PC-3 (cell line): ENCODE measurements at regions of chr6 and their contacts with region 1.

Region 1: DNA sequence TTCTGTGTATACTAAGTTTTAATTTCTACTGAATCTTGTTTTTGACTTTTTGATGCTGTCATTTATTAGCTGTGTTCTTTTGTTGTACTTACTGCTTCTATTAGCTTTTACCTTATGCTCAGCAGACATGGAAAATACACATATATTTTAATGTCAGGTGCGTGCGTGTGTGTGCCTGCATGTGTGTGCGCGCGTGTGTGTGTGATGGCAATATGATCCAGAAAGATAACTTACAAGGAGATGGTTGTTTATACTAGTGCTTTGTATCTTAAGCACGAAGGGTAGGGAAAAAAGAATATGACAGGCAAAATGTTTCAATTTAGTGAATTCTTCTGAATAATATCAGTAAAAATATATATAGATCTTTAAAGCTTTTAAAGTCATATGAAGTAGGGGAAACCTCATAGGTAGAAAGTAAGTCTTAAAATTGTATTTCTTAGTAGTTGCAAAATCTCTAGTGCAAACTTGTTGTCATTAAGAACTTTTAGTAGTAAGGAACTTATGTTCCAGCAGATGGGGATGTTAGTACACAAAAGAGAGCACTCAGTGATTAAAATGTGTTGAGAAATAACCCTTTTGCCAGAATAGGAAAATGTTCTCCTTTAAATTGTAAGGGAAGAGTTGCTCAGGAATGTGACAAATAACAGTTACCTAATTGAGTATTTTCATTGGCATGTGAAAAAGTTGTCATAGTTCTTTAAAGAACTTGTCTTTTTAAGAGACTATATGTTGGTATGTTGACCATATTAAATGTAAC is 13.2 kb downstream of the QKI start:
- DNase-seq: peak; percentile 47
- ATAC-seq: no peak
- H3K4me3 ChIP-seq: no peak overlapping the region
- H3K27ac ChIP-seq: no peak overlapping the region
- H3K4me1 ChIP-seq: peaks cover 4% of the 10 kb centered on the region
- H3K27me3 ChIP-seq: no peaks in the 10 kb centered on the region
- CTCF ChIP-seq: peak; percentile 54; the same call in 1 of the 2 replicates

Region 2: GRCh38 chr6:163554663-163555062 is 127.0 kb after region 1 on chr6:
- CTCF ChIA-PET with region 1: no interaction called
- POLR2A ChIA-PET with region 1: no interaction called
- intact Hi-C with region 1: loop called (anchors 5 kb)
- DNase-seq: peak; percentile 60
- ATAC-seq: peak; percentile 45
- H3K4me3 ChIP-seq: no peak overlapping the region
- H3K27ac ChIP-seq: no peak overlapping the region
- H3K4me1 ChIP-seq: no peaks in the 10 kb centered on the region
- H3K27me3 ChIP-seq: no peaks in the 10 kb centered on the region
- CTCF ChIP-seq: peak; percentile 75

Region 3: GRCh38 chr6:163579880-163580295 is 152.2 kb after region 1 on chr6:
- CTCF ChIA-PET with region 1: interaction called, 4 read pairs
- POLR2A ChIA-PET with region 1: no interaction called
- intact Hi-C with region 1: loop called (anchors 5 kb)
- DNase-seq: peak; percentile 57
- ATAC-seq: peak; percentile 40
- H3K4me3 ChIP-seq: no peak overlapping the region
- H3K27ac ChIP-seq: no peak overlapping the region
- H3K4me1 ChIP-seq: peaks cover 9% of the 10 kb centered on the region; the same call in 1 of the 2 replicates
- H3K27me3 ChIP-seq: no peaks in the 10 kb centered on the region
- CTCF ChIP-seq: peak; percentile 48; the same call in 1 of the 2 replicates

Region 4: DNA sequence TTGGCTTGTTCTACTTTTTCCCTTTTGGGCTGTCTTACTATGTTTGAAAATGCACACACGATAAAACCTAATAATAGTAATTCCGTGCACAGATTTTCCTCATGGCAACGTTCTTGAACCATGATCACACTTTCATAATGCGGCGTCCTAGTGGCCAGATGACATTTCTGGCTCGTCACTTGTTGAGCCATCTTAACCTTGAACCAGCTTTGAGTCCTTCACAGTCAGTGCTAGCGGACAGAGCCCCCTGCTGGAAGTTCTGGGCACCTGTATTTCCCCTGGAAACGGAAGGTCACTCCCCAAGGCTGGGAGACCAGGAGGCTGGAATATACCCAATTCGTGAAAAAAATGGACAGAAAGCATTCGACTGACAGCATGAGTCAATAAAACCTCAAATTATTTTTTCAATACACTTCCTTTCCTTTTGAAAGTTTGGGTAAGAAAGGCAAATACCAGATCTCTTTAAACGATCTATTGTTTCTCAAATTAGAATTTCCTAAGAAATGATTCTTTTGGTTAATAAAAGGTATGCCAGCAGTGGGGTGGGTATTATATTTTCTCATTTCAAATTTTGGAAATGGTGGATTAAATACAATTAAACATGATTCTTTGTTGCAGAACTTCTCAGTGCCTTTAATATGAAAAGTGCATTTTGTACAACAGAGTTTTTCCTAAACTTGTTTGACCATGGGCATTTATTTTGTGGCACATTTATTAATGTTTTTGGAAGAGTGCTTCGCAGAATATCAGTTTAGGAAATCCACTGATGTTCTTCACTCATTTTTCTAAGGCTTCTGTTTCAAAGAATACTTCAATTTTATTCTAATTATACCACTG is 529.1 kb after region 1 on chr6:
- CTCF ChIA-PET with region 1: no interaction called
- POLR2A ChIA-PET with region 1: no interaction called
- intact Hi-C with region 1: loop called (anchors 10 kb)
- DNase-seq: peak; percentile 72
- ATAC-seq: no peak; the same call in 1 of the 2 replicates
- H3K4me3 ChIP-seq: no peak overlapping the region
- H3K27ac ChIP-seq: no peak overlapping the region
- H3K4me1 ChIP-seq: no peaks in the 10 kb centered on the region
- H3K27me3 ChIP-seq: peaks cover 18% of the 10 kb centered on the region
- CTCF ChIP-seq: peak; percentile 78

Region 5: GRCh38 chr6:165055231-165055630 is 1627.6 kb after region 1 on chr6:
- CTCF ChIA-PET with region 1: no interaction called
- POLR2A ChIA-PET with region 1: no interaction called
- intact Hi-C with region 1: loop called (anchors 10 kb)
- DNase-seq: peak; percentile 68
- ATAC-seq: peak; percentile 67
- H3K4me3 ChIP-seq: no peak overlapping the region
- H3K27ac ChIP-seq: no peak overlapping the region
- H3K4me1 ChIP-seq: peaks cover 21% of the 10 kb centered on the region
- H3K27me3 ChIP-seq: no peaks in the 10 kb centered on the region
- CTCF ChIP-seq: peak; percentile 56